Activated naive CD4-positive, alpha-beta T cell treated with anti-CD3 and anti-CD28 coated beads for 36 hours (primary cell): ENCODE measurements at regions of chr12 and their contacts with region 1.

Region 1: GRCh38 chr12:4148418-4149056 is 125.0 kb upstream of the CCND2 start:
- DNase-seq: peak; percentile 82
- H3K4me3 Mint-ChIP-seq: no peak overlapping the region
- H3K27ac Mint-ChIP-seq: peak overlapping the region; percentile 92
- H3K4me1 Mint-ChIP-seq: peaks cover 89% of the 10 kb centered on the region
- H3K27me3 Mint-ChIP-seq: no peaks in the 10 kb centered on the region

Region 2: DNA sequence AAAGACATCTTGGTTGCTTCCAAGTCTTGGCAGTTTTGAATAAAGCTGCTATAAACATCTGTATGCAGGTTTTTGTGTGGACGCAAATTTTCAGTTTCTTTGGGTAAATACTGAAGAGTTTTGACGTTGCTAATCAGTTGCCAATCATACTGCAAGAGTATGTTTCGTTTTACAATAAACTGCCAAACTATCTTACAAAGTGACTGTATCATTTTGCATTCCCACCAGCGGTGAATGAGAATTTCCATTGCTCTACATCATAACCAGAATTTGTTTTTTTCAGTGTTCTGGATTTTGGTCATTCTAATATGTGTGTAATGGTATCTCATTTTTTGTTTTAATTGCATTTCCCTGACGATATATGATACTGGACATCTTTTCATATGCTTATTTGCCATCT is 84.5 kb before region 1 on chr12:
- CTCF ChIA-PET with region 1: no interaction called
- intact Hi-C with region 1: loop called (anchors 5 kb)
- DNase-seq: no peak
- H3K4me3 Mint-ChIP-seq: no peak overlapping the region
- H3K27ac Mint-ChIP-seq: peak overlapping the region; percentile 58
- H3K4me1 Mint-ChIP-seq: peaks cover 30% of the 10 kb centered on the region
- H3K27me3 Mint-ChIP-seq: no peaks in the 10 kb centered on the region

Region 3: GRCh38 chr12:4112734-4113325 is 35.7 kb before region 1 on chr12:
- CTCF ChIA-PET with region 1: interaction called, 44 read pairs
- intact Hi-C with region 1: loop called (anchors 1 kb)
- DNase-seq: no peak
- H3K4me3 Mint-ChIP-seq: no peak overlapping the region
- H3K27ac Mint-ChIP-seq: peak overlapping the region; percentile 73
- H3K4me1 Mint-ChIP-seq: peaks cover 61% of the 10 kb centered on the region
- H3K27me3 Mint-ChIP-seq: peaks cover 3% of the 10 kb centered on the region

Region 4: GRCh38 chr12:4135919-4136605 is 12.5 kb before region 1 on chr12:
- CTCF ChIA-PET with region 1: interaction called, 18 read pairs
- intact Hi-C with region 1: loop called (anchors 1 kb)
- DNase-seq: peak; percentile 95
- H3K4me3 Mint-ChIP-seq: peak overlapping the region; percentile 41
- H3K27ac Mint-ChIP-seq: peak overlapping the region; percentile 99
- H3K4me1 Mint-ChIP-seq: peaks cover 75% of the 10 kb centered on the region
- H3K27me3 Mint-ChIP-seq: no peaks in the 10 kb centered on the region

Region 5: DNA sequence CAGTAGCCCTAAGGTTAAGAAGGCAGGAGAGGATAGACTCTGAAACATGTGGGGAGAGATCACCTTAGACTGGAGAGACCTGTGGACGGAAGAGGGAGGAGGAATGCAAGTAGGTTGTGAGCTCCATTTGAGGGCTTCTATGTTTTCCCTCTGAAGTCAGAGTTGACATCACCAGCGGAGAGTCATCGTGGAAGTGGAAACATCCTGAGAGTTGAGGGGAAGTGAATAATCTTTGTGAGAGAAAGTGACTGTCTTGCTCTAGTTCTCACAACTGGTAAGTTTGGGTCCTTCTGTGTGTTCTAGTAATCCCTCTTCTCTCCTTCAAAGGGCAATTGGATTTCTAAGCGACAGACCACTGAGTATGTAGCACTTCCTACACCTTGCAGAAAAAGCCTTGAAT is 21.4 kb after region 1 on chr12:
- CTCF ChIA-PET with region 1: interaction called, 29 read pairs
- intact Hi-C with region 1: loop called (anchors 1 kb)
- DNase-seq: peak; percentile 79
- H3K4me3 Mint-ChIP-seq: no peak overlapping the region
- H3K27ac Mint-ChIP-seq: peak overlapping the region; percentile 82
- H3K4me1 Mint-ChIP-seq: peaks cover 39% of the 10 kb centered on the region
- H3K27me3 Mint-ChIP-seq: no peaks in the 10 kb centered on the region

Region 6: DNA sequence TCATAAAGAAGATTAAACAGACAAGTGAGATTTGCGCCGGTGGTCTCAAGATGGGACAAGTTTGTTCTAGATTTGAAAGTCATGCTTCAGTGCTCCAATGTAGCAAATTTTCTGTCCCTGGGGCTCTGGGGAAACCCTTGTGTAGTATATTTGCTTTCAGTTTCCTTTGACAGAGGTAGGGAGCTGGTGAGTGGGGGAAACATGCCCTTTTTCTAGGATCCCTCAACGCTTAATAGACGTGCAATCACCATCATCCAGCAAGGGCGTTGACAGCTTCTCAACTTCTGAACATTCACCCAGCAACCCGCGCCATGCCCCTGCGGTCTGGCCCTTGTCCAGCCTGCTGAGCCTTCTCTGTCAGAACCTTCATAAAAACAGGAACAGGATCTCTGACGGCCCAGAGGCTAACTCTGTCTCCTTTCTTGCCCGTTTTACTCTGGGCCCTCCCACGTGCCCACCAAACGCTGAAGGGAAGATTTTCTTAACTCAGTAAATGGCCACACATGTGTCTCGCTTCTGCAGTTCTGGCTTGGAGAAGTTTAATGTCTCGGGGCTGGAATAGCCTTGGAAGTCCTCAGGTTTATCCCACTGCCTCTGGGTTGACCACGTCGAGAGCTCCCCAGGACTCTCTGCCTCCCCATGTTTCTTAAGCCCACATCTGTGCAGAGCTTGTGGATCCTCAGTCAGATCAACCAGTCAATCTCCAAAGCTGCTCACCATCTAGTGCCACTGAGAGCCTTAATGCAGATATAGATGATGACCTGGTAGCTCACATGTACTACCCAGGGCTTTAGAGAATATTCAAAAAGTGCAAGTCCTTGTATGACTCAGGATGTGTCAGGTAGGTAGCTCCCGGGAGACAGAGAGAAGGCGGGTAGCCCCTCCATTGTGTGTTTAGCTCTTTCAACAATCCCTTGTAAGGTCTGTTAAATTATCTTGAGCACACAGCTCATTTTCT is 67.0 kb after region 1 on chr12:
- CTCF ChIA-PET with region 1: interaction called, 23 read pairs
- intact Hi-C with region 1: loop called (anchors 1 kb)
- DNase-seq: peak; percentile 79
- H3K4me3 Mint-ChIP-seq: peak overlapping the region; percentile 60
- H3K27ac Mint-ChIP-seq: peak overlapping the region; percentile 91
- H3K4me1 Mint-ChIP-seq: peaks cover 33% of the 10 kb centered on the region
- H3K27me3 Mint-ChIP-seq: no peaks in the 10 kb centered on the region

Region 7: GRCh38 chr12:5096241-5096935 is 947.9 kb after region 1 on chr12:
- CTCF ChIA-PET with region 1: no interaction called
- intact Hi-C with region 1: no loop called
- DNase-seq: no peak
- H3K4me3 Mint-ChIP-seq: no peak overlapping the region
- H3K27ac Mint-ChIP-seq: no peak overlapping the region
- H3K4me1 Mint-ChIP-seq: no peaks in the 10 kb centered on the region
- H3K27me3 Mint-ChIP-seq: peaks cover 5% of the 10 kb centered on the region